ENCODE measurements at regions of chr2 and their contacts with region 1.

Region 1: GRCh38 chr2:121076885-121077549 is 208.0 kb downstream of the TFCP2L1 start:
- DNase-seq: peak; percentile 30 to 71 (median 44)
- ATAC-seq: peak; percentile 58
- H3K4me3 ChIP-seq: no peak overlapping the region
- H3K4me3 Mint-ChIP-seq: no peak overlapping the region
- H3K27ac ChIP-seq: no peak overlapping the region
- H3K27ac Mint-ChIP-seq: no peak overlapping the region
- H3K4me1 ChIP-seq: peaks cover 8% of the 10 kb centered on the region
- H3K4me1 Mint-ChIP-seq: no peaks in the 10 kb centered on the region
- H3K27me3 ChIP-seq: peaks cover 18% of the 10 kb centered on the region in 2 experiments
- H3K27me3 Mint-ChIP-seq: peaks cover 49% of the 10 kb centered on the region
- CTCF ChIP-seq: peak; percentile 84

Region 2: GRCh38 chr2:120693121-120693520 is 383.9 kb before region 1 on chr2:
- CTCF ChIA-PET with region 1: no interaction called
- POLR2A ChIA-PET with region 1: no interaction called
- intact Hi-C with region 1: loop called in 1 of 2 experiments (anchors 5 kb)
- DNase-seq: no peak
- ATAC-seq: no peak
- H3K4me3 ChIP-seq: no peak overlapping the region
- H3K4me3 Mint-ChIP-seq: no peak overlapping the region
- H3K27ac ChIP-seq: no peak overlapping the region
- H3K27ac Mint-ChIP-seq: no peak overlapping the region
- H3K4me1 ChIP-seq: peaks cover 4% of the 10 kb centered on the region
- H3K4me1 Mint-ChIP-seq: peaks cover 6% of the 10 kb centered on the region
- H3K27me3 ChIP-seq: peaks cover 23 to 24% of the 10 kb centered on the region in 2 experiments
- H3K27me3 Mint-ChIP-seq: peaks cover 76% of the 10 kb centered on the region
- CTCF ChIP-seq: no peak

Region 3: DNA sequence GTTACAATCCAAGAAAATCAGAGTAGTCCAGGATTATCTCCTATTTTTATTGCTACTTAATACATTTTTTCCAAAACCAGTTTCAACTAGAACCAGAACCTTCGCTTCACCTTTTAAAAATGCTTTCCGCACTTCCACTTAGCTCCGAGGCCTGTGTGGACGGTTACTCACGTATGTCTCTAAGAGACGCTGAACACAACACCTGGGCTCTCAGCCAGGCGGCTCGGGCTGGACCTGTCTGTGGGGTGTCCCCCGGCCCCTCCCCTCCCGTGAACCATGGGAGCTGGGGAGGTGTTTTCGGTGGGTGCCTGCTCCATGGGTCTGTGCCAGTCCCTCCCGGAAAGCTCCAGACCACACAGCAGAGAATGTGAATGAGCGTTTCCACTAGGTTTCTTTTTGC is 117.6 kb before region 1 on chr2:
- CTCF ChIA-PET with region 1: no interaction called
- POLR2A ChIA-PET with region 1: no interaction called
- intact Hi-C with region 1: no loop called
- DNase-seq: no peak
- ATAC-seq: no peak
- H3K4me3 ChIP-seq: no peak overlapping the region
- H3K4me3 Mint-ChIP-seq: no peak overlapping the region
- H3K27ac ChIP-seq: no peak overlapping the region
- H3K27ac Mint-ChIP-seq: no peak overlapping the region
- H3K4me1 ChIP-seq: no peaks in the 10 kb centered on the region
- H3K4me1 Mint-ChIP-seq: no peaks in the 10 kb centered on the region
- H3K27me3 ChIP-seq: no peaks in the 10 kb centered on the region
- H3K27me3 Mint-ChIP-seq: no peaks in the 10 kb centered on the region
- CTCF ChIP-seq: no peak

Measured in CD4-positive, alpha-beta T cell (primary cell).